ENCODE measurements at regions of chr20 and their contacts with region 1.

Region 1: GRCh38 chr20:51712501-51713197 is 55.5 kb downstream of the ATP9A start:
- DNase-seq: peak; percentile 75

Region 2: DNA sequence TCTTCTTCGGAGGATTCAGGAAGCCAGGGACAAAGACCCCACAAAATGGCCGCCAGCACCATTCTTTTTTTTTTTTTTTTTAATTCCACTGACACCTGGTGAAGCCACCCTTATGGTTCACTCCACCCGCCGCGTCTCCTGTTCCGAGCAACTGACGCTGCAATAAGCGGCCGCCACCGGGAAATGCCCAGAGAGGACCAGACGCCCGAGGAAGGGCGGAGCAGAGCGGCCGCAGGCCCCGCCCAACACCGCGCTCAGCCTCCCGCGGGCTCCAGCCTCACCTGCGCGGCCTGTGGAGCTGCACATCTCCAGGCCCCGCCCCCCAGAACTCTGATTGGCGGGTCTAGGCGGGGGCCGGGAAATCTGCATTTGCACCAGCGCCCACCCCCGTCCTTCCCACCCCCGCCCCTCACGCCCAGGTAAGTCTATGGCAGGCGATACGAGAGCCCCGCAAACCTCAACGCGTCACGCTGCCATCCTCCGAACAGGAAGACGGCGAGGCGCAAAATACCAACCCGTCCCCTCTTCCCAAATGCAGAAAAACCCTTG is 54.4 kb after region 1 on chr20:
- intact Hi-C with region 1: loop called in 1 of 2 experiments (anchors 10 kb)
- DNase-seq: peak; percentile 90

Region 3: GRCh38 chr20:51784299-51784698 is 71.7 kb after region 1 on chr20:
- intact Hi-C with region 1: loop called in 1 of 2 experiments (anchors 2 kb)
- DNase-seq: no peak

Measured in posterior vena cava (tissue), 2 donors.